CD4-positive, alpha-beta memory T cell (primary cell): ENCODE measurements at regions of chr6 and their contacts with region 1.

Region 1: GRCh38 chr6:129598244-129599187 is 111.5 kb downstream of the ARHGAP18 start:
- DNase-seq: peak in 4 of 5 donors; percentile 68 to 73 (median 71)
- H3K4me3 ChIP-seq: no peak overlapping the region
- H3K4me3 Mint-ChIP-seq: no peak overlapping the region
- H3K27ac ChIP-seq: no peak overlapping the region
- H3K27ac Mint-ChIP-seq: no peak overlapping the region
- H3K4me1 ChIP-seq: peaks cover 3% of the 10 kb centered on the region
- H3K4me1 Mint-ChIP-seq: peaks cover 0 to 2% (median under 1%) of the 10 kb centered on the region in 4 donors
- H3K27me3 ChIP-seq: no peaks in the 10 kb centered on the region
- H3K27me3 Mint-ChIP-seq: no peaks in the 10 kb centered on the region

Region 2: DNA sequence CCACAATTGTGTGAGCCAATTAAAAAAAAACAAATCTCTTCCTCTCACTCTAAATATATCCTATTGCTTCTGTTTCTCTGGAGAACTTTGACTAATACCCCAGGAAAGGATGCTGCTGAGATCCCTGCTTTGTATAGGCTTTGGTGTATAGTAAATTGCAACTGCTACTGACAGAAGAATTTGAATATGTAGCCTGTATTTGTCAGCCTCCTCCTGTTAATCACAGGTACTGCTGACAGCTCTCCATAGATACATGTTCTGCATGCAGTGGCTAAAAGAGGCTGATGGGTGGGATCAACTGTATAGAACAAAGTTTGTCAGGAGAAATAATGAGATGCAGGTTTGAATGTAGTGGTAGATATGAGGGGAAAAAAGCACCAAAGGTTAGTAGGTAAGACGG is 16.5 kb after region 1 on chr6:
- CTCF ChIA-PET with region 1: interaction called, 23 read pairs
- POLR2A ChIA-PET with region 1: no interaction called
- intact Hi-C with region 1: no loop called
- DNase-seq: no peak
- H3K4me3 ChIP-seq: no peak overlapping the region
- H3K4me3 Mint-ChIP-seq: no peak overlapping the region
- H3K27ac ChIP-seq: no peak overlapping the region
- H3K27ac Mint-ChIP-seq: peak overlapping the region in 1 of 7 donors; percentile 16
- H3K4me1 ChIP-seq: no peaks in the 10 kb centered on the region
- H3K4me1 Mint-ChIP-seq: peaks cover 0 to 2% (median 0%) of the 10 kb centered on the region in 4 donors
- H3K27me3 ChIP-seq: no peaks in the 10 kb centered on the region
- H3K27me3 Mint-ChIP-seq: no peaks in the 10 kb centered on the region

Region 3: GRCh38 chr6:129709769-129710449 is 111.4 kb after region 1 on chr6 and contains the start of gene ARHGAP18:
- CTCF ChIA-PET with region 1: interaction called, 14 read pairs
- POLR2A ChIA-PET with region 1: no interaction called
- intact Hi-C with region 1: no loop called
- DNase-seq: peak; percentile 58 to 76 (median 68)
- H3K4me3 ChIP-seq: peak within 1 kb of the TSS; percentile 81 to 97
- H3K4me3 Mint-ChIP-seq: peak within 1 kb of the TSS; percentile 95 to 99 (median 98)
- H3K27ac ChIP-seq: peak within 1 kb of the TSS; percentile 65
- H3K27ac Mint-ChIP-seq: peak within 1 kb of the TSS; percentile 57 to 96 (median 94)
- H3K4me1 ChIP-seq: peaks cover 38% of the 10 kb centered on the region
- H3K4me1 Mint-ChIP-seq: peaks cover 29 to 45% (median 38%) of the 10 kb centered on the region in 4 donors
- H3K27me3 ChIP-seq: no peaks in the 10 kb centered on the region
- H3K27me3 Mint-ChIP-seq: peaks cover 0 to 2% of the 10 kb centered on the region in 2 donors
- total RNA-seq, gene ARHGAP18: 4.3 to 4.6 TPM

Region 4: GRCh38 chr6:129740013-129740412 is 141.5 kb after region 1 on chr6:
- CTCF ChIA-PET with region 1: interaction called, 15 read pairs
- POLR2A ChIA-PET with region 1: no interaction called
- intact Hi-C with region 1: no loop called
- DNase-seq: no peak
- H3K4me3 ChIP-seq: no peak overlapping the region
- H3K4me3 Mint-ChIP-seq: no peak overlapping the region
- H3K27ac ChIP-seq: no peak overlapping the region
- H3K27ac Mint-ChIP-seq: peak overlapping the region in 1 of 7 donors; percentile 32
- H3K4me1 ChIP-seq: peaks cover 18% of the 10 kb centered on the region
- H3K4me1 Mint-ChIP-seq: peaks cover 12 to 21% (median 16%) of the 10 kb centered on the region in 4 donors
- H3K27me3 ChIP-seq: no peaks in the 10 kb centered on the region
- H3K27me3 Mint-ChIP-seq: no peaks in the 10 kb centered on the region

Region 5: DNA sequence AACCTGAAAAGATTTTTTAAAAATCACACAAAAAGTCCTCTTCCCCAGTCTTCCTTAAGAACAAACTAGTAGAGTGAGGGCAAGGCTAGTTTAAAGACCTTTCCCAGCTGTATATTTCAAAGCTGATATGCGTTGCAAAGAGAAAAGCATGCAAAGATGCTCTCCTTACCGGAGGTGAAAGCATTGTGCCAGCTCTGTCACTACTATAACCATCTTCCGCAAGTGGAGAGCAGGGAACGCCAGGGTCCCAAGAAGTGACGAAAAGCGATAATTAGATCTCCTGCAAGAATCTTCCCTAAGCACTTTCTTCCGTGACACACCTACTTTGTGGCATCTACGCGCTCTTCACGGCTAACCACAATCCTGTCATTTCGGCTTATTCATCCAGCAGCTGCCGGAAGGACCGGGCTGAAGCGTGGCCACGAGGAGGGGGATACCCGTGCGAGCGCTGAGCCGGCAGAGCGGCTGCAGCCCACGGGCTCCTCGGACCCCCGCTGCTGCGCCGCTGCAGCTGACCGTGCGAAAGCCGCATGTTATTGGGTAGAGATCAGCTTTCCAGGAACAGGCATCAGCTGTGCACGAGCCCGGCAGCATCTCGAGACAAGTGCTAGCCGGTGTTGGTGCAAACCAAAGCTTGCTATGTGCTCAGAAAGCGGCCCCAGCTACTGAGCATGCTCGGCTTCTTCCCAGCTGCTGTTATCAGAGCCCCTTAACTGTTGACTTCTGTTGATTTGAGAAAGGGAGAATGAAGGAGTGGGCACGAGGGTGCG is 168.6 kb after region 1 on chr6:
- CTCF ChIA-PET with region 1: interaction called, 14 read pairs
- POLR2A ChIA-PET with region 1: no interaction called
- intact Hi-C with region 1: no loop called
- DNase-seq: peak; percentile 54 to 75 (median 57)
- H3K4me3 ChIP-seq: peak overlapping the region; percentile 46 to 50
- H3K4me3 Mint-ChIP-seq: peak overlapping the region; percentile 75 to 90 (median 85)
- H3K27ac ChIP-seq: no peak overlapping the region
- H3K27ac Mint-ChIP-seq: peak overlapping the region in 5 of 7 donors; percentile 10 to 62 (median 38)
- H3K4me1 ChIP-seq: peaks cover 15% of the 10 kb centered on the region
- H3K4me1 Mint-ChIP-seq: peaks cover 9 to 17% (median 12%) of the 10 kb centered on the region in 4 donors
- H3K27me3 ChIP-seq: peaks cover 4% of the 10 kb centered on the region
- H3K27me3 Mint-ChIP-seq: peaks cover 0 to 12% of the 10 kb centered on the region in 2 donors

Region 6: DNA sequence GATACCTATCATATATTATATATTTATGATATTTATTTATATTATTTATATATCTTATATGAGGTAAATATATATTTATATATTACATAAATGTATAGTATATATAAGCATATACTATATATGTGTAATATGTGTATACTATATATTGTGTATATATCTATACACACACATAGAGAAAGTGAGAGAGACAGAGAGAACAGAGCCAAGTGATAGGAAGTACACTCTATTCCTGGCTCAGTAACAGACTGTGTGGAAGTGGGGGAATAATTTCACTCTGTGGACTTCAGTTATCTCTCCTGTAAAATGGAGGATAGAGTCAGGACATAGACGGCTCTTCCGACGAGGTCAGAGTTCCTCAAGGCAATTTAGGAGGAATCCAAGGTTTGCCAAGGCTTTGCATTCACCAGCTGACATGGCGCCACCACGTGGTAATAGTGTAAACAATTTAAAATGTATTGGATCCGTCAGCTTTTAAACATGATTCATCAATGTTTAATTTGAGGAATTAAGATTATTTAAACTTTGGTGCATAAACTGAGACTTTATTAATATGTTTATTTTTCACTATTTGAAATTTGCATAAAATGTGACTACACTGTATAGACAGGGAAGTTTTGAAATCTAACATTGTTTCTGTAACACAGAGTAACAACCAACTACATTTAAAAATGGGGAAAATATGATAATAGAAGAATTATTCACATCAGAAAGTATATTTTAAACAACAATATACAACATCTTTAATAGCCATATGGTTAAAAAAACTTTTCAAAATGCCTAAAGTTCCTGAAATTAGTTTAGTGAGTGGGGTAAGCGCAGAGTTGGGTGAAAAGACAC is 338.0 kb after region 1 on chr6:
- CTCF ChIA-PET with region 1: interaction called, 14 read pairs
- POLR2A ChIA-PET with region 1: no interaction called
- intact Hi-C with region 1: loop called (anchors 1 kb)
- DNase-seq: peak in 4 of 5 donors; percentile 25 to 39 (median 34)
- H3K4me3 ChIP-seq: no peak overlapping the region
- H3K4me3 Mint-ChIP-seq: peak overlapping the region in 2 of 8 donors; percentile 38 to 79
- H3K27ac ChIP-seq: no peak overlapping the region
- H3K27ac Mint-ChIP-seq: no peak overlapping the region
- H3K4me1 ChIP-seq: no peaks in the 10 kb centered on the region
- H3K4me1 Mint-ChIP-seq: peaks cover 0 to 4% (median 1%) of the 10 kb centered on the region in 4 donors
- H3K27me3 ChIP-seq: peaks cover 4% of the 10 kb centered on the region
- H3K27me3 Mint-ChIP-seq: peaks cover 11 to 15% of the 10 kb centered on the region in 2 donors